CD8-positive, alpha-beta T cell (primary cell): ENCODE measurements at regions of chr1 and their contacts with region 1.

Region 1: DNA sequence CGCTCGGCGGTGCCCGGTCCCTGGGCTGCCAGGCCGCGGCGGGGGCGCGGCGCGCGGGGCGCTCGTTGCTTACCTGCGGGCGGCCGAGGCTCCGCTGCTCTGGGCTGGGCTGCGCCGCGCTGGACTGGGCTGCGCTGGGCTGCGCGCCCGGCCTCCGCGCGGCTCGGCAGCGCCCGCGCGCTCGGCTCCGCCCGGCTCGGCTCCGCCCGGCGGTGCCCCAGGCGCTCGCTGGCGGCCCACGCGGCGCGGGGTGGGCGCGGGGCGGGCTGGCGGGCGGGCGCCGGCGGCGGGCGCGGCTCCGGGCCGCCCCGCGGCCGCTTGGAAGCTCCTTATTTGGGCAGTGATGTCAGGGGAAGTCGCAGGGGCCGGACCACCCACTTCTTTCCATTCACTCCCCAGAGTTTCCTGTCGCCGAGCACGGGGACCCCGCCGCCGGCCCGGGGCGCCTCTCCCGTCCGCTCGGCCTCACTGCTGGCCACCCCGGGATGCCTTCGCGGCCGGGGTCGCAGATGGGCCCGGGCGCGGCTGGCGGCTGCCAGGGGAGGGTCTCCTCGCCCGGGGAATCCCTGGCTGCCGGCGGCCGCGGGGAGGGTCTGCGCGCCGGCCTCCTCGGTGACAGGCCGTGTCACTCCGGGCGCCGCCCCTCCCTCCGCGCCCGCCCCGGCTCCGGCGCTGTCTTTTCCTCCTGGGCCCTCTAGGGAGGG is 177.7 kb upstream of the EDN2 start:
- DNase-seq: peak; percentile 34 to 90 (median 72)
- ATAC-seq: peak; percentile 86
- H3K4me3 ChIP-seq: peak overlapping the region; percentile 61 to 76
- H3K4me3 Mint-ChIP-seq: peak overlapping the region; percentile 26
- H3K27ac ChIP-seq: peak overlapping the region; percentile 28 to 68
- H3K27ac Mint-ChIP-seq: no peak overlapping the region
- H3K4me1 ChIP-seq: peaks cover 35% of the 10 kb centered on the region
- H3K4me1 Mint-ChIP-seq: peaks cover 77% of the 10 kb centered on the region
- H3K27me3 ChIP-seq: no peaks in the 10 kb centered on the region
- H3K27me3 Mint-ChIP-seq: no peaks in the 10 kb centered on the region
- CTCF ChIP-seq: no peak

Region 2: GRCh38 chr1:41360993-41361753 is 301.0 kb before region 1 on chr1 and contains the start of gene FOXO6:
- CTCF ChIA-PET with region 1: no interaction called
- POLR2A ChIA-PET with region 1: no interaction called
- intact Hi-C with region 1: loop called in 1 of 2 experiments (anchors 10 kb)
- DNase-seq: peak; percentile 85 to 97 (median 94)
- ATAC-seq: peak; percentile 90
- H3K4me3 ChIP-seq: peak within 1 kb of the TSS; percentile 35 to 52
- H3K4me3 Mint-ChIP-seq: peak within 1 kb of the TSS; percentile 82
- H3K27ac ChIP-seq: peak within 1 kb of the TSS; percentile 14 to 25
- H3K27ac Mint-ChIP-seq: peak within 1 kb of the TSS; percentile 28
- H3K4me1 ChIP-seq: peaks cover 22% of the 10 kb centered on the region
- H3K4me1 Mint-ChIP-seq: peaks cover 23% of the 10 kb centered on the region
- H3K27me3 ChIP-seq: peaks cover 10 to 11% of the 10 kb centered on the region in 2 experiments
- H3K27me3 Mint-ChIP-seq: peaks cover 29% of the 10 kb centered on the region
- CTCF ChIP-seq: no peak
- total RNA-seq, gene FOXO6: 1.4 to 1.7 TPM

Region 3: GRCh38 chr1:41404308-41404761 is 257.9 kb before region 1 on chr1:
- CTCF ChIA-PET with region 1: no interaction called
- POLR2A ChIA-PET with region 1: no interaction called
- intact Hi-C with region 1: no loop called
- DNase-seq: peak in 5 of 9 experiments; percentile 14 to 50 (median 37)
- ATAC-seq: peak; percentile 58
- H3K4me3 ChIP-seq: no peak overlapping the region
- H3K4me3 Mint-ChIP-seq: no peak overlapping the region
- H3K27ac ChIP-seq: no peak overlapping the region
- H3K27ac Mint-ChIP-seq: no peak overlapping the region
- H3K4me1 ChIP-seq: peaks cover 5% of the 10 kb centered on the region
- H3K4me1 Mint-ChIP-seq: no peaks in the 10 kb centered on the region
- H3K27me3 ChIP-seq: no peaks in the 10 kb centered on the region
- H3K27me3 Mint-ChIP-seq: peaks cover 31% of the 10 kb centered on the region
- CTCF ChIP-seq: no peak

Region 4: GRCh38 chr1:41622859-41623723 is 39.1 kb before region 1 on chr1:
- CTCF ChIA-PET with region 1: no interaction called
- POLR2A ChIA-PET with region 1: no interaction called
- intact Hi-C with region 1: no loop called
- DNase-seq: peak in 1 of 9 experiments; percentile 31
- ATAC-seq: no peak
- H3K4me3 ChIP-seq: no peak overlapping the region
- H3K4me3 Mint-ChIP-seq: no peak overlapping the region
- H3K27ac ChIP-seq: no peak overlapping the region
- H3K27ac Mint-ChIP-seq: no peak overlapping the region
- H3K4me1 ChIP-seq: peaks cover 11% of the 10 kb centered on the region
- H3K4me1 Mint-ChIP-seq: peaks cover 26% of the 10 kb centered on the region
- H3K27me3 ChIP-seq: no peaks in the 10 kb centered on the region
- H3K27me3 Mint-ChIP-seq: no peaks in the 10 kb centered on the region
- CTCF ChIP-seq: no peak

Region 5: GRCh38 chr1:41673378-41673777 is 11.2 kb after region 1 on chr1:
- CTCF ChIA-PET with region 1: no interaction called
- POLR2A ChIA-PET with region 1: interaction called, 19 read pairs
- intact Hi-C with region 1: no loop called
- DNase-seq: peak; percentile 22 to 86 (median 55)
- ATAC-seq: peak; percentile 88
- H3K4me3 ChIP-seq: peak overlapping the region; percentile 2 to 30
- H3K4me3 Mint-ChIP-seq: peak overlapping the region; percentile 70
- H3K27ac ChIP-seq: peak overlapping the region; percentile 22 to 62
- H3K27ac Mint-ChIP-seq: peak overlapping the region; percentile 66
- H3K4me1 ChIP-seq: peaks cover 43% of the 10 kb centered on the region
- H3K4me1 Mint-ChIP-seq: peaks cover 66% of the 10 kb centered on the region
- H3K27me3 ChIP-seq: no peaks in the 10 kb centered on the region
- H3K27me3 Mint-ChIP-seq: no peaks in the 10 kb centered on the region
- CTCF ChIP-seq: no peak

Region 6: GRCh38 chr1:41751804-41752513 is 89.7 kb after region 1 on chr1:
- CTCF ChIA-PET with region 1: no interaction called
- POLR2A ChIA-PET with region 1: no interaction called
- intact Hi-C with region 1: loop called in 1 of 2 experiments (anchors 5 kb)
- DNase-seq: peak in 1 of 9 experiments; percentile 38
- ATAC-seq: no peak
- H3K4me3 ChIP-seq: no peak overlapping the region
- H3K4me3 Mint-ChIP-seq: no peak overlapping the region
- H3K27ac ChIP-seq: no peak overlapping the region
- H3K27ac Mint-ChIP-seq: peak overlapping the region; percentile 55
- H3K4me1 ChIP-seq: peaks cover 47% of the 10 kb centered on the region
- H3K4me1 Mint-ChIP-seq: peaks cover 53% of the 10 kb centered on the region
- H3K27me3 ChIP-seq: no peaks in the 10 kb centered on the region
- H3K27me3 Mint-ChIP-seq: no peaks in the 10 kb centered on the region
- CTCF ChIP-seq: no peak

Region 7: GRCh38 chr1:41802532-41803501 is 140.6 kb after region 1 on chr1:
- CTCF ChIA-PET with region 1: no interaction called
- POLR2A ChIA-PET with region 1: no interaction called
- intact Hi-C with region 1: loop called in 1 of 2 experiments (anchors 5 kb)
- DNase-seq: peak in 8 of 9 experiments; percentile 14 to 74 (median 42)
- ATAC-seq: peak; percentile 42
- H3K4me3 ChIP-seq: peak overlapping the region in 1 of 2 experiments; percentile 0
- H3K4me3 Mint-ChIP-seq: peak overlapping the region; percentile 61
- H3K27ac ChIP-seq: peak overlapping the region; percentile 26 to 75
- H3K27ac Mint-ChIP-seq: peak overlapping the region; percentile 94
- H3K4me1 ChIP-seq: peaks cover 81% of the 10 kb centered on the region
- H3K4me1 Mint-ChIP-seq: peaks cover 87% of the 10 kb centered on the region
- H3K27me3 ChIP-seq: no peaks in the 10 kb centered on the region
- H3K27me3 Mint-ChIP-seq: no peaks in the 10 kb centered on the region
- CTCF ChIP-seq: no peak

Region 8: DNA sequence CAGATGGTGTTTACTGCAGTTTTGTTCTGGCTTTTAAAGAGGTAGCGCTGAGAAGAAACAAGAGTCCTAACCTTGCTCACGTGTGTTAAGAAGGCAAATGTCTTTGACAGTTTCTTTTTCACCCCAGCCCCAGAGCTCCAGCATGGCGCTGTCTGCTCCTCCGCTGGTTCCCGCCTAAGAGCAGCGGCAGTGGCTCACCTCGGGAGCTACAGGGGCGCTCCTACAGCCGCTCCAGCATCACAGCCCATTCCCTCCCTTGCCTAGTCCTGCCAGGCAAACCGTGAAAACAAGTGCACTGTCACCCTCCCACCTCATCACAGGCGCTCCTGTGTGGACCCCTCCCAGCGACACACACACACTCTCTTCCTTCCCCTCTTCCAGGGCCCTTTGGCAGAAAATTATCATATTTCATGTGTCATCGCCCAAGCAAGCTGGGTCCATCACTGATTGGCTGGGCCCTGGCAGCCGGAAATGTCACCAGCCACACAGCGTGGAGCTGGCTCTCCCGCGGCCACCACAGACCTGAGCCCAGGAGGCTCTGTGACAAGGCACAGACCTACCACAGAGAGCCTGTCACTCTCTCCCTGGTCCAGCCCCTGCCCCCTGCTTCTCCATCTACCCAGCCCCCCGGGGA is 257.7 kb after region 1 on chr1:
- CTCF ChIA-PET with region 1: no interaction called
- POLR2A ChIA-PET with region 1: no interaction called
- intact Hi-C with region 1: loop called in 1 of 2 experiments (anchors 5 kb)
- DNase-seq: peak; percentile 39 to 90 (median 77)
- ATAC-seq: peak; percentile 81
- H3K4me3 ChIP-seq: peak overlapping the region; percentile 51 to 57
- H3K4me3 Mint-ChIP-seq: peak overlapping the region; percentile 95
- H3K27ac ChIP-seq: peak overlapping the region; percentile 56 to 74
- H3K27ac Mint-ChIP-seq: peak overlapping the region; percentile 98
- H3K4me1 ChIP-seq: peaks cover 43% of the 10 kb centered on the region
- H3K4me1 Mint-ChIP-seq: peaks cover 58% of the 10 kb centered on the region
- H3K27me3 ChIP-seq: no peaks in the 10 kb centered on the region
- H3K27me3 Mint-ChIP-seq: no peaks in the 10 kb centered on the region
- CTCF ChIP-seq: no peak

Region 9: GRCh38 chr1:41936118-41936517 is 273.9 kb after region 1 on chr1:
- CTCF ChIA-PET with region 1: no interaction called
- POLR2A ChIA-PET with region 1: no interaction called
- intact Hi-C with region 1: no loop called
- DNase-seq: no peak
- ATAC-seq: no peak
- H3K4me3 ChIP-seq: no peak overlapping the region
- H3K4me3 Mint-ChIP-seq: no peak overlapping the region
- H3K27ac ChIP-seq: no peak overlapping the region
- H3K27ac Mint-ChIP-seq: no peak overlapping the region
- H3K4me1 ChIP-seq: no peaks in the 10 kb centered on the region
- H3K4me1 Mint-ChIP-seq: no peaks in the 10 kb centered on the region
- H3K27me3 ChIP-seq: no peaks in the 10 kb centered on the region
- H3K27me3 Mint-ChIP-seq: no peaks in the 10 kb centered on the region
- CTCF ChIP-seq: no peak

Region 10: DNA sequence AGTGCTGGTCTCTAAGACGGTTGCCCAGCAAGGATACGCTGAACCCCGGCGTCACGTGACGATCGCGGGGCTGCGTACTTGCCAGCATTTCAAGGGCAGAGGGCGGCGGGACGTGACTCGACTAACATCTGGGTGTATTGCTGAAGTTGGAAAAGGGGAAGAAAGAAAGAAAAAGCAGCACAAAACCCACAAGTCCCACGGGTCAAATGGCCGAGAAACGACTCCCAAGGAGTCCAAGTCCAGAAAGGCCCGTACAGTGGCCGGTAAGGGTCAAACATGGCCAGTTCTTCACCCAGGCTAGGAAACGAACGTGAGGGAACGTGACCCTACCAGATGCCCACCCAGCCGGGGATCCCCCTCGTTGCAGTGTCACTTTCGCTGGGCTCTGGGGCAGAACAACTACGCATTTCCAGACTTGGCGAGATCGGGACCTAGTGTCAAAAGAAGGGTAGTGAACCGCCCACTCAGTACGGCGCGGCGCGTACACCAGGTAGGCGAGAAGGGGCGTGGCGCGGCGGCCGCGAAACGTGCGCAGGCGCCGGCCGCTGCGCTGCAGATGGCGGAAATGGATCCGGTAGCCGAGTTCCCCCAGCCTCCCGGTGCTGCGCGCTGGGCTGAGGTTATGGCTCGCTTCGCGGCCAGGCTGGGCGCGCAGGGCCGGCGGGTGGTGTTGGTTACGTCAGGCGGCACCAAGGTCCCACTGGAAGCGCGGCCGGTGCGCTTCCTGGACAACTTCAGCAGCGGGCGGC is 794.0 kb after region 1 on chr1 and contains the starts of genes PPCS and ZMYND12:
- CTCF ChIA-PET with region 1: no interaction called
- POLR2A ChIA-PET with region 1: no interaction called
- intact Hi-C with region 1: loop called in 1 of 2 experiments (anchors 5 kb)
- DNase-seq: peak; percentile 82 to 98 (median 91)
- ATAC-seq: peak; percentile 92
- H3K4me3 ChIP-seq: peak within 1 kb of the TSS; percentile 99
- H3K4me3 Mint-ChIP-seq: peak within 1 kb of the TSS; percentile 98
- H3K27ac ChIP-seq: peak within 1 kb of the TSS; percentile 99 to 100
- H3K27ac Mint-ChIP-seq: peak within 1 kb of the TSS; percentile 100
- H3K4me1 ChIP-seq: peaks cover 25% of the 10 kb centered on the region
- H3K4me1 Mint-ChIP-seq: peaks cover 37% of the 10 kb centered on the region
- H3K27me3 ChIP-seq: no peaks in the 10 kb centered on the region
- H3K27me3 Mint-ChIP-seq: no peaks in the 10 kb centered on the region
- CTCF ChIP-seq: peak; percentile 34
- total RNA-seq, gene PPCS: 38.0 to 38.1 TPM
- total RNA-seq, gene ZMYND12: 0.56 to 0.76 TPM